A549 (cell line): ENCODE measurements at regions of chr1 and their contacts with region 1.

Region 1: GRCh38 chr1:52904927-52905698 is 16.4 kb downstream of the ECHDC2 start:
- DNase-seq: peak; percentile 25 to 61
- ATAC-seq: peak; percentile 78 to 87
- H3K4me3 ChIP-seq: no peak overlapping the region
- H3K27ac ChIP-seq: 0 out of 6 replicates have a peak overlapping the region, but pooled peaks of 1 of the 2 experiments have one; percentile 40
- H3K4me1 ChIP-seq: peaks cover 10% of the 10 kb centered on the region; the same call in 1 of the 3 replicates
- CTCF ChIP-seq: peak; percentile 26
- EP300 ChIP-seq: no peak
- POLR2A ChIP-seq: no peak
- RAD21 ChIP-seq: peak; percentile 41 to 53

Region 2: GRCh38 chr1:52691821-52692220 is 213.3 kb before region 1 on chr1:
- CTCF ChIA-PET with region 1: no interaction called
- POLR2A ChIA-PET with region 1: no interaction called
- DNase-seq: no peak
- ATAC-seq: no peak
- H3K4me3 ChIP-seq: no peak overlapping the region
- H3K27ac ChIP-seq: no peak overlapping the region
- H3K4me1 ChIP-seq: no peaks in the 10 kb centered on the region
- CTCF ChIP-seq: no peak
- EP300 ChIP-seq: no peak
- POLR2A ChIP-seq: no peak
- RAD21 ChIP-seq: no peak

Region 3: DNA sequence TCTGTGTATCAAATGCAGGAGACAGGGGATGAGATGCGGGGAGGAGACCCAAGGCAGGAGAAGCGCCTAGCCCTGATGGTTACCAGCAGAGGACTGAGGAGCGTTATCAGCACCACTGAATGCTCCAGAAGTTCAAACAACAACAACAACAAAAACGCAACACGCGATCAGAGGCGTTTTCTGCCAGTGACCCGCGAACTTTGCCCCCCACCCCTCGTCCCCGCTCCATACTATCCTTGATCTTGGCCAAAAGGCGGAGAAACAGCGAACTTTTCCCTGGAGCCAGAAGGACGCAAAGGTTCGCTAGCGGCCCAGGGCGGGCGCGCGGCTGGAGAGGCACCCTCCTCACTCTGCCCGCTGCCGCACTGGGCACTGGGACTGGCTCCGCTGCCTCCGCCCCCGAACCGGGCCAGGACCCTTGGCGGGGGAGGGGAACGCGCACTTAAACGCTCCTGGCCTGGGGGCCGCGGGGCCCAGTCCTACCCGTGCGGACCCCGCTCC is 15.7 kb after region 1 on chr1:
- CTCF ChIA-PET with region 1: interaction called, 10 read pairs
- POLR2A ChIA-PET with region 1: no interaction called
- DNase-seq: no peak
- ATAC-seq: peak in 1 of 2 experiments; percentile 9; a peak in 3 of 6 replicates
- H3K4me3 ChIP-seq: peak overlapping the region; percentile 53
- H3K27ac ChIP-seq: peak overlapping the region; percentile 81 to 94; a peak in 5 of 6 replicates
- H3K4me1 ChIP-seq: peaks cover 9% of the 10 kb centered on the region; the same call in 2 of the 3 replicates
- CTCF ChIP-seq: no peak
- EP300 ChIP-seq: no peak
- POLR2A ChIP-seq: no peak
- RAD21 ChIP-seq: no peak